BJ (cell line): ENCODE measurements at regions of chr11 and their contacts with region 1.

Region 1: DNA sequence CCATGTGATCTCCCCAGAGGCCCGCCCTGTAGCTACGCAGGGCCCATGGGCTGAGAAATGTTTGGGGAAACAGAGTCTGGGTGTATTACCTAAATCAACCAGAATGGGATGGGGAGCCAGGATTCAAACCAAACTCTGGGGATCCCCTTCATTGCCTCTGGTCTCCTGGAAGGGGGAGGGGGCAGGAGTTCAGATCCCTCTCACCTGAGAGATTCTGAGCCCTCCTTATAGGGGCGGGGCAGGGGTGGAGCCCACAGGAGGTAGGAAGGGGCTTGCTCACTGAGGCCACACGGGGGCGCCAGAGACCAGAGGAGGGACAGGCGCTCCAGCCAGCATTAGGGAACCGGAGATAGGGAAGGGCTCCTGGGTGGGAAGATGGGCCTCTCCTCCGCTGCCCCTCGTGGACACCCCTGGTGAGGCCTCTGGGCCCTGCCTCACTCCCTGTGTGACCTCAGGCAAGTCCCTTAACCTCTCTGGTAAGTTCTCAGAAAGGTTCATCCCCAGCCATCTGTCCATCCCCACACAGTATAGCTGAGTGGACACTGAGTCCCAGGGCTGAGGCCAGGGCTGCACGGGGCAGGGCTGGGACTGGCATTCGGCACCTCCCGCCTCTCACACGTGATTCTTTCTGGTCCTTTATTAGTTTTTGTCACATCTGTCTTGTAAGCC is 2.7 kb upstream of the CDC42BPG start:
- DNase-seq: no peak
- H3K4me3 ChIP-seq: no peak overlapping the region
- H3K27me3 ChIP-seq: no peaks in the 10 kb centered on the region
- CTCF ChIP-seq: peak; percentile 96

Region 2: GRCh38 chr11:64834723-64835620 is 12.2 kb before region 1 on chr11:
- CTCF ChIA-PET with region 1: interaction called, 50 read pairs
- POLR2A ChIA-PET with region 1: no interaction called
- DNase-seq: no peak
- H3K4me3 ChIP-seq: no peak overlapping the region
- H3K27me3 ChIP-seq: no peaks in the 10 kb centered on the region; the same call in 1 of the 2 replicates
- CTCF ChIP-seq: no peak

Region 3: DNA sequence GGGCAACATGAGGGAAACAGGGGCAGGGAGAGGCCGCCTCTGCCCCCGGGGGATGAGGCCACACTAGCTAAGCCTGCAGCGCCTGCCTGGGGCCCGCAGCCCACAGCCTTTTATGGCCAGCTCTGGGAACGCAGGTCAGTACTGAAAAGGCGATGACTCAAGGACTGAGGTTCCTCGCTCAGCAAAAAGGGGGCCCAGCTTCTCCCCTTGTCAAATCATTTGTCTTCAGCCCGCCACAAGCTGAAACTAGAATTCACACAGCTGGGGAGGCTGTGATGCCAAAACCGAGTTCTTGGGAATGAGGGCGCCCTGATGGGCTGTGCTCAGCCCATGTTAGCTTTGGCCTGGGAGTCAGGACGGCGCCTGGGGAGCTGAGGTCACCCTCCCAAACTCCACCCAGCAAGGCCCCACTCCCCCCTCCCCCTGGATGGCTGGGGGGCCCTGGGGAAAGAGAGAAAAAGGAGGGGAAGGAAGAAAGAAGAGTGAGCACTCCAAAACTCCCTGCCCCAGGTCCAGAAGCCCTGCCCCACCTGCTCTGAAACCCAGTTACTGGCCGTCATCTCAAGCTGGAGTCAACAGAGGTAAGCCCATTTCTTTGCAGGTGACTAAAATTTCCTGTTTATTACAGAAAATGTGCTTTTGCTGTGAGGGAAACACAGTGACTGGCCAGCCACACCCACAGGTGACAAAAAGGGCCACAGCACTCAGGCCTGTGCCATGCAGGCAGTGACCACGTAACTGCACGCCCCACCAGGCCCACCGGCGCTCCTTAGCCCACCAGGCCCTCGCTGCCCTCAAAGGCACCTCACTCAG is 17.5 kb after region 1 on chr11:
- CTCF ChIA-PET with region 1: interaction called, 15 read pairs
- POLR2A ChIA-PET with region 1: no interaction called
- DNase-seq: no peak
- H3K4me3 ChIP-seq: no peak overlapping the region
- H3K27me3 ChIP-seq: no peaks in the 10 kb centered on the region
- CTCF ChIP-seq: no peak

Region 4: GRCh38 chr11:64878494-64879243 is 31.5 kb after region 1 on chr11 and contains the start of gene EHD1:
- CTCF ChIA-PET with region 1: interaction called, 797 read pairs
- POLR2A ChIA-PET with region 1: interaction called, 4 read pairs
- DNase-seq: peak; percentile 77
- H3K4me3 ChIP-seq: peak within 1 kb of the TSS; percentile 77
- H3K27me3 ChIP-seq: no peaks in the 10 kb centered on the region
- CTCF ChIP-seq: peak; percentile 71
- polyA plus RNA-seq, gene EHD1: 95.3 and 191 TPM in 2 replicates

Region 5: GRCh38 chr11:64996710-64997380 is 149.7 kb after region 1 on chr11 and contains the start of gene BATF2:
- CTCF ChIA-PET with region 1: interaction called, 13 read pairs
- POLR2A ChIA-PET with region 1: no interaction called
- DNase-seq: no peak
- H3K4me3 ChIP-seq: peak within 1 kb of the TSS; percentile 35
- H3K27me3 ChIP-seq: no peaks in the 10 kb centered on the region; the same call in 1 of the 2 replicates
- CTCF ChIP-seq: peak; percentile 74
- polyA plus RNA-seq, gene BATF2: 1.1 and 1.5 TPM in 2 replicates

Region 6: DNA sequence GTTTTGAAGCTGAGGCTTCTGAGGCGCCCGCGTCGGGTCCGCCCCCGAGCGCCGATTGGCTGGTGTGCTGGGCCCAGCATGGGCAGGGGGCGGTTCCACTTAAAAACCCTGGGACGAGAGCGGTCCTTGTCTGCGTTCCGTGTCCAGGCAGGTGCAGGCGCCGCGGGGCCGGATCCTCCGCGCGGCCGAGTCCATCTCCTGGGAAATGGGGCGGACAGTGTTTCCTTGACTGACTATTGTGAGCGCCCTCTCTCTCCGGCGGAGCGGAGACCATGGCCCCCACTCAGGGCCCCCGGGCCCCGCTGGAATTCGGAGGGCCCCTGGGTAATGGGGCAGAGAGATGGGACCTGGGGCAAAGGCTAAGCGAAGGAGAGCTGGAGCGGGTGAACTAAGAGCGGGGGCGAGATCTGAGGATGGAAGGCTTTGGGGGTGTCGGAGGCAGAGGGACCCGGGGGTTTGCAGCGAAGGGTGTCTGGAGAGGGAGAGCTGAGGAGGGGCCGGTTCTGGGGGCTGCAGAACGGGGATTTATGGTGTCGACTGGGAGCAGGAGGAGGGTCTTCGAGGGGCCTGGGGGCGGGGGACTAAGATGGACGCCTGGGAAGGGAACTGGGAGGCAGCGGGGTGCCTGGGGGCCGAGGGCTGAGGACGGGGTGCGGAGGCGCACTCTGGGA is 264.7 kb after region 1 on chr11 and contains the start of gene TM7SF2:
- CTCF ChIA-PET with region 1: interaction called, 12 read pairs
- POLR2A ChIA-PET with region 1: no interaction called
- DNase-seq: peak; percentile 49
- H3K4me3 ChIP-seq: peak within 1 kb of the TSS; percentile 44
- H3K27me3 ChIP-seq: no peaks in the 10 kb centered on the region
- CTCF ChIP-seq: no peak
- polyA plus RNA-seq, gene TM7SF2: 5.0 and 8.2 TPM in 2 replicates

Region 7: GRCh38 chr11:65117216-65118096 is 270.3 kb after region 1 on chr11 and contains the start of gene ZNHIT2:
- CTCF ChIA-PET with region 1: interaction called, 12 read pairs
- POLR2A ChIA-PET with region 1: no interaction called
- DNase-seq: peak; percentile 94
- H3K4me3 ChIP-seq: peak within 1 kb of the TSS; percentile 79
- H3K27me3 ChIP-seq: no peaks in the 10 kb centered on the region
- CTCF ChIP-seq: peak; percentile 90
- polyA plus RNA-seq, gene ZNHIT2: 3.6 and 4.6 TPM in 2 replicates